ENCODE measurements at regions of chr1 and their contacts with region 1.

Region 1: GRCh38 chr1:35079003-35079930 is at the start of gene ZMYM1:
- DNase-seq: peak; percentile 85
- H3K4me3 Mint-ChIP-seq: peak within 1 kb of the TSS; percentile 97
- H3K27ac Mint-ChIP-seq: peak within 1 kb of the TSS; percentile 99
- H3K4me1 Mint-ChIP-seq: peaks cover 14% of the 10 kb centered on the region
- H3K27me3 Mint-ChIP-seq: peaks cover 14% of the 10 kb centered on the region
- CTCF ChIP-seq: no peak
- total RNA-seq, gene ZMYM1: 33.4 and 40.2 TPM in 2 replicates

Region 2: GRCh38 chr1:35030756-35031446 is 48.4 kb before region 1 on chr1:
- CTCF ChIA-PET with region 1: interaction called, 3 read pairs
- intact Hi-C with region 1: loop called (anchors 5 kb)
- DNase-seq: peak; percentile 11
- H3K4me3 Mint-ChIP-seq: peak overlapping the region; percentile 90
- H3K27ac Mint-ChIP-seq: peak overlapping the region; percentile 96
- H3K4me1 Mint-ChIP-seq: peaks cover 20% of the 10 kb centered on the region
- H3K27me3 Mint-ChIP-seq: no peaks in the 10 kb centered on the region
- CTCF ChIP-seq: no peak

Region 3: GRCh38 chr1:35637401-35637809 is 558.1 kb after region 1 on chr1:
- CTCF ChIA-PET with region 1: no interaction called
- intact Hi-C with region 1: no loop called
- DNase-seq: no peak
- H3K4me3 Mint-ChIP-seq: peak overlapping the region; percentile 52
- H3K27ac Mint-ChIP-seq: peak overlapping the region; percentile 78
- H3K4me1 Mint-ChIP-seq: peaks cover 10% of the 10 kb centered on the region
- H3K27me3 Mint-ChIP-seq: no peaks in the 10 kb centered on the region
- CTCF ChIP-seq: no peak